ENCODE measurements at regions of chr1 and their contacts with region 1.

Region 1: DNA sequence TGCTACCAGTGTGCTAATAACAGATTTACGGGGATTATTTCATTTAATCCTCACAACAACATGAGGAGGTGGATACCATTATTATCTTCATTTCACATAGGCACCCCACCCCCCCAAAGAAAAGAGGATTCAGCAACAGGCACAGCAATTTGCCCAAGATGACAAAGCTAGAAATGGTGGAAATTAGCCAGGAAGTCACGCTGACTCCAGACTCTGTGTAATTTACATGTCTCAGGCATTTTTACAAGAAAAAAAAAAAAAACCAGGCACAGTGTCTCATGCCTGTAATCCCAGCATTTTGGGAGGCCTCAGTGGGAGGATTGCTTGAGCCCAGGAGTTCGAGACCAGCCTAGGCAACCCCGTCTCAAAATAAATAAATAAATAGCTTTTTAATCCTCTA is 37.5 kb upstream of the PRDM2 start:
- DNase-seq: no peak
- ATAC-seq: peak in 3 of 8 donors; percentile 19 to 41 (median 34)
- H3K4me3 ChIP-seq: no peak overlapping the region
- H3K27ac ChIP-seq: peak overlapping the region in 1 of 10 donors; percentile 45
- H3K4me1 ChIP-seq: peaks cover 0 to 14% (median 0%) of the 10 kb centered on the region in 9 donors
- H3K27me3 ChIP-seq: peaks cover 0 to 6% (median 0%) of the 10 kb centered on the region in 7 donors
- CTCF ChIP-seq: no peak

Region 2: DNA sequence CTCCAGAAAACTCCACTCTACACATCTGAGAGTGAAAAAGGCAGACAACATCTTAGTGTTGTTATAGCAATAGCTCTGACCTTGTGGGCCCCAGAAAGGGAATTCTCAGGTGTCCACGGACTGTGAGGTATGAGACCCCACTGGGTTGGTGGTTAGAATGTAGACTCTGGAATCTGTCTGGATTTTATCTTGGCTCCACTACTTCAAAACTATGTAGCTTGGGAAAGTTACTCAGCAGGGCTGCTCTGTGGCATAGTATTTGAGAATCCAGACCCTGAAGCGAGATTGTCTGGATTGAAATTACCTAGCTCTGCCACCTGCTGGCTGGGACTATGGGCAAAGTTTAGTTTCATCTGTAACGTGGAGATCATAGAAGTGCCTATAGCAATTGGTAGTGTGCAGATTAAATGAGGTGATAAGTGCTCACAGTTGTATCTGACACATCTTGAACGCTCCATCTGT is 63.3 kb after region 1 on chr1:
- intact Hi-C with region 1: loop called in 1 of 10 experiments (anchors 10 kb)
- DNase-seq: no peak
- ATAC-seq: no peak
- H3K4me3 ChIP-seq: no peak overlapping the region
- H3K27ac ChIP-seq: no peak overlapping the region
- H3K4me1 ChIP-seq: peaks cover 0 to 29% (median 0%) of the 10 kb centered on the region in 9 donors
- H3K27me3 ChIP-seq: no peaks in the 10 kb centered on the region
- CTCF ChIP-seq: peak in 7 of 9 donors; percentile 23 to 44 (median 42)

Region 3: DNA sequence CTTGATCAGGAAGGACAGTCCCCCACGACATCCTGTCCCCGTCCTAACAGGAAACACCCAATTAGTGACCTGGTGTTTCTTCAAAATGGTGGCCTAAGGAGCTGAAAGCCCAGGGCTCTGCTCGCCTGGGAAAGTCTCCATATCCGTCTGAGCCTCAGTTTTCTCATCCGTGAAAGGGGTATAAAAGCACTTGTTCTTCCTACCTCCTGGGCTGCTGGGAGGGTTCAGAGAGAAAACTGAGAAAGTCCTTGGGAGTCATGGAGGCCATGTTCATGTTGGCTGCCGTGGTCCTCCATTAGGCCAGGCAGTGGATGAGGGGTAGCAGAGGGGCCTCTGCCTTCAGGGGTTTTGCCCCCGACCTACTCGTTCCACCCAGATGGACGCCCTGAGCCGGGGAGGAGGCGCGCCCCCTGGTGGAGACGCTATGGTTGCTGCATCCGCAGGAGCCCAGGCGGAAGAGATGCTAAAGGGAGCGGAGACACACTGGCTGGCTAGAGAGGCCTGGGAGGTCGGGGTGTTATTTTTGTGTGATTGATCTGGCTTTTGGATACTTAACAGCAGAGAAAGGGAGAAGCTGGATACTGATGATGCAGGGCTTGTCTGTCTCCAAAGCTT is 151.0 kb after region 1 on chr1:
- intact Hi-C with region 1: loop called in 5 of 10 experiments (anchors 2 to 10 kb)
- DNase-seq: peak in 1 of 2 donors; percentile 49
- ATAC-seq: peak in 3 of 8 donors; percentile 41 to 52 (median 44)
- H3K4me3 ChIP-seq: no peak overlapping the region
- H3K27ac ChIP-seq: no peak overlapping the region
- H3K4me1 ChIP-seq: peaks cover 0 to 7% (median 3%) of the 10 kb centered on the region in 9 donors
- H3K27me3 ChIP-seq: no peaks in the 10 kb centered on the region
- CTCF ChIP-seq: peak; percentile 21 to 76 (median 50)

Region 4: DNA sequence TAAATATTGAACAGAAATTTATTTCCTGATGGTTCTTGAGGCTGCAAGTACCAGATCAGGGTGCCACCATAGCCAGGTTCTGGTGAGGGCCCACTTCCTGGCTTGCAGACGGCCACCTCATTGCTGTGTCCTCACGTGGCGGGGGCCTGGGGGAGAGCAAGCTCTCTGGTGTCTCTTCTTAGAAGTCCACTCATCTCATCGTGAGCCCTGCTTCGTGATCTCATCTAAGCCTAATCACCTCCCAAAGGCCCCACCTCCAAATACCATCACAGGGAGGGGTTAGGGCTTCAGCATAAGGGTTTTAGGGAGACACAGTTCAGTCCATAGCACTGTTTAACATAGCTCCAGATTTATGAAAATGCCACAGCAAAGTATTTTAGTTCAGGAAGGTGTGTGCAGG is 157.1 kb after region 1 on chr1:
- intact Hi-C with region 1: loop called in 8 of 10 experiments (anchors 5 to 10 kb)
- DNase-seq: no peak
- ATAC-seq: no peak
- H3K4me3 ChIP-seq: no peak overlapping the region
- H3K27ac ChIP-seq: no peak overlapping the region
- H3K4me1 ChIP-seq: no peaks in the 10 kb centered on the region
- H3K27me3 ChIP-seq: no peaks in the 10 kb centered on the region
- CTCF ChIP-seq: no peak

Region 5: GRCh38 chr1:13828454-13829151 is 166.1 kb after region 1 on chr1:
- intact Hi-C with region 1: loop called in 5 of 10 experiments (anchors 5 to 10 kb)
- DNase-seq: no peak
- ATAC-seq: peak in 2 of 8 donors; percentile 9 to 54
- H3K4me3 ChIP-seq: no peak overlapping the region
- H3K27ac ChIP-seq: no peak overlapping the region
- H3K4me1 ChIP-seq: peaks cover 0 to 6% (median 0%) of the 10 kb centered on the region in 9 donors
- H3K27me3 ChIP-seq: peaks cover 0 to 29% (median 5%) of the 10 kb centered on the region in 7 donors
- CTCF ChIP-seq: peak in 7 of 9 donors; percentile 34 to 57 (median 41)

Region 6: DNA sequence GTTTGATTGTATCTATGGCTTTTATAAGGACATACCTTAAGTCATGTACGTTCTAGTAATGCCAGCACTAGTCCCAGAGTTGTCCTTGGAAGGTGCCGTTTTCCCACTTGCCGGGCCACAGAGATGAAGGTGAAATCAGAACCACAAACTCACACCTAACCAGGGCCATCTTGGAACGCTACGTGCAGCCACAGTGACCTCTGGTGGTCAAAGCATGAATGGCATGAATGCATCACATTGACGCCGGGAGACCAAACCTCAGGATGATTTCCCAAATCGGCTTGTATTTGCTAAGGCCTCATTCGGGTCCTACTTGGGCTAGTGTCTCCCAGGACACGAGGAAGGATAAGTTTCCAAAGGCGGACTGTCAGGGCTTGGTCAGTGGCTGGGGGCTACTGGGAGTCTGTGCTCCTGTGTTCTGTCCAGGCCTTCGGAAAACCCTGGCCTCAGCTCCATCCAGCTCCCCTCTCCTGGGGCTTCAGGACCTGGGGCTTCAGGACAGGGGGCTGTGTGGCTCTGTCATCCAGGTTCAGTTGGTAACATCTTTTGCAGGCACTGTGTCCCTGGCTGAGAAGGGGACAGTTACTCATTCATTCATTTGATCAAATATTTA is 298.0 kb after region 1 on chr1:
- intact Hi-C with region 1: loop called (anchors 1 to 5 kb)
- DNase-seq: peak; percentile 51 to 60
- ATAC-seq: peak; percentile 20 to 77 (median 59)
- H3K4me3 ChIP-seq: no peak overlapping the region
- H3K27ac ChIP-seq: no peak overlapping the region
- H3K4me1 ChIP-seq: no peaks in the 10 kb centered on the region
- H3K27me3 ChIP-seq: peaks cover 0 to 39% (median 11%) of the 10 kb centered on the region in 7 donors
- CTCF ChIP-seq: peak; percentile 94 to 99 (median 97)